ENCODE measurements at regions of chr7 and their contacts with region 1.

Region 1: DNA sequence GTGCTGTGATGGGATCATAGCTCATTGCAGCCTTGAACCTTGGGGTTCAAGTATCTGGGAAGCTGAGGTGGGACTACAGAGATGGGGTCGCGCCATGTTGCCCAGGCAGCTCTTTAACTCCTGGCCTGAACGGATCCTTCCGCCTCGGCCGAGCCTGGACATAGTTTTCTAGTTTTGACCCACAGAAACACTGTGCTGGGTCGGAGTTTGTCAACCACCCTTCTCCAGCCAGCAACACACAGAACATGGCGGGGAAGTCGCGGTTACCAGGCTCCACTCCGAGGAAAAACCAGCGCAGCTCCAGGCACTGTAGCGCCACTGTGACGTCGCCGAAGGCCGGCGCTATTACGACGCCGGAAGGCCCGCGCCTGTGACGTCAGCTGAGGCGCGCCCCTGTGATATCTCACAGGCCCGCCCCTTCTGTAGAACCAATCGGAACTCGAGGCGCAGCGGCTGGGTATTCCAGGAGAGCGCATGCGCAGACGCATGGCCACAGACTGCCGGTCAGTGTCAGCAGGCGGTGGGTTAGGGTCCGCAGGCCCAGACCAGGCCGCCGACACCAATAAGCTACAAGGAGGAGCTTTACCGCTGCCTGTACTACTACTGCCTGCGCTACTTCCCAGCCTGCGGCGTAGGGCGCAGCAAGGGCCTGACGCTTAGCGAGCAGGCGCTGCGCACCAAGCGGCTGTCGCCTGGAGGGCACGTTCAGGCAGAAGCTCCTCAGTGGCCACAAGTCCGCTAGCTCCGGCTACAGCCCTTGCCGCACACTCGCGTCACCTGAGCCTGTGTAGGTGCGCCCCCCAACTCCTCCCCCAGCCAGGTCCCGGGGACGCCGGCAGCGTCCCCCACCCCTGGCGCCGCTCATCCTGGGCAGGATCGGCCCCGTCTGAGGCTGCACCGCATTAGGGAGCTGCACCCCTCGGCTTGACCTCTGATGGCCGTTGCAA is 135.2 kb upstream of the KCTD7 start:
- DNase-seq: peak; percentile 98 to 99 (median 98)
- H3K4me3 ChIP-seq: peak overlapping the region; percentile 34 to 86 (median 58)
- H3K27ac ChIP-seq: peak overlapping the region; percentile 54 to 95 (median 91)
- H3K4me1 ChIP-seq: peaks cover 5 to 19% of the 10 kb centered on the region in 2 donors
- H3K27me3 ChIP-seq: no peaks in the 10 kb centered on the region
- CTCF ChIP-seq: peak in 5 of 6 experiments; percentile 32 to 62 (median 40)
- POLR2A ChIP-seq: peak; percentile 92 to 96

Region 2: GRCh38 chr7:66429498-66430163 is 63.9 kb before region 1 on chr7:
- intact Hi-C with region 1: loop called in 1 of 2 experiments (anchors 10 kb)
- DNase-seq: no peak
- H3K4me3 ChIP-seq: no peak overlapping the region
- H3K27ac ChIP-seq: peak overlapping the region; percentile 1 to 69 (median 61)
- H3K4me1 ChIP-seq: peaks cover 25 to 31% of the 10 kb centered on the region in 2 donors
- H3K27me3 ChIP-seq: no peaks in the 10 kb centered on the region
- CTCF ChIP-seq: no peak
- POLR2A ChIP-seq: no peak

Region 3: GRCh38 chr7:66522518-66522917 is 29.0 kb after region 1 on chr7:
- intact Hi-C with region 1: no loop called
- DNase-seq: peak in 3 of 7 donors; percentile 44 to 51 (median 47)
- H3K4me3 ChIP-seq: no peak overlapping the region
- H3K27ac ChIP-seq: no peak overlapping the region
- H3K4me1 ChIP-seq: no peaks in the 10 kb centered on the region
- H3K27me3 ChIP-seq: no peaks in the 10 kb centered on the region
- CTCF ChIP-seq: peak in 5 of 6 experiments; percentile 12 to 38 (median 30)
- POLR2A ChIP-seq: no peak

Region 4: GRCh38 chr7:66602161-66602560 is 108.7 kb after region 1 on chr7:
- intact Hi-C with region 1: no loop called
- DNase-seq: no peak
- H3K4me3 ChIP-seq: no peak overlapping the region
- H3K27ac ChIP-seq: no peak overlapping the region
- H3K4me1 ChIP-seq: no peaks in the 10 kb centered on the region
- H3K27me3 ChIP-seq: no peaks in the 10 kb centered on the region
- CTCF ChIP-seq: no peak
- POLR2A ChIP-seq: no peak